T-cell (primary cell): ENCODE measurements at regions of chr2 and their contacts with region 1.

Region 1: GRCh38 chr2:118003396-118003824 is 10.5 kb downstream of the CCDC93 start:
- DNase-seq: peak in 29 of 35 experiments; percentile 4 to 87 (median 32)
- ATAC-seq: peak; percentile 93 to 97 (median 97)
- H3K4me3 ChIP-seq: no peak overlapping the region
- H3K4me3 Mint-ChIP-seq: no peak overlapping the region
- H3K27ac ChIP-seq: no peak overlapping the region
- H3K27ac Mint-ChIP-seq: peak overlapping the region in 1 of 2 donors; percentile 67
- H3K4me1 ChIP-seq: peaks cover 0 to 9% of the 10 kb centered on the region in 2 experiments
- H3K4me1 Mint-ChIP-seq: peaks cover 16 to 32% (median 25%) of the 10 kb centered on the region in 3 donors
- H3K27me3 ChIP-seq: no peaks in the 10 kb centered on the region
- H3K27me3 Mint-ChIP-seq: no peaks in the 10 kb centered on the region

Region 2: GRCh38 chr2:116467243-116467642 is 1536.2 kb before region 1 on chr2:
- CTCF ChIA-PET with region 1: no interaction called
- POLR2A ChIA-PET with region 1: no interaction called
- DNase-seq: no peak
- ATAC-seq: no peak
- H3K4me3 ChIP-seq: no peak overlapping the region
- H3K4me3 Mint-ChIP-seq: no peak overlapping the region
- H3K27ac ChIP-seq: no peak overlapping the region
- H3K27ac Mint-ChIP-seq: no peak overlapping the region
- H3K4me1 ChIP-seq: no peaks in the 10 kb centered on the region
- H3K4me1 Mint-ChIP-seq: no peaks in the 10 kb centered on the region
- H3K27me3 ChIP-seq: no peaks in the 10 kb centered on the region
- H3K27me3 Mint-ChIP-seq: no peaks in the 10 kb centered on the region

Region 3: GRCh38 chr2:117723888-117724434 is 279.4 kb before region 1 on chr2:
- CTCF ChIA-PET with region 1: no interaction called
- POLR2A ChIA-PET with region 1: no interaction called
- DNase-seq: no peak
- ATAC-seq: no peak
- H3K4me3 ChIP-seq: no peak overlapping the region
- H3K4me3 Mint-ChIP-seq: no peak overlapping the region
- H3K27ac ChIP-seq: no peak overlapping the region
- H3K27ac Mint-ChIP-seq: no peak overlapping the region
- H3K4me1 ChIP-seq: no peaks in the 10 kb centered on the region
- H3K4me1 Mint-ChIP-seq: peaks cover 0 to 3% (median 0%) of the 10 kb centered on the region in 3 donors
- H3K27me3 ChIP-seq: peaks cover 0 to 4% of the 10 kb centered on the region in 2 experiments
- H3K27me3 Mint-ChIP-seq: peaks cover 0 to 9% of the 10 kb centered on the region in 2 donors

Region 4: GRCh38 chr2:117814417-117815264 is 188.8 kb before region 1 on chr2 and contains the start of gene DDX18:
- CTCF ChIA-PET with region 1: interaction called, 5 to 76 read pairs
- POLR2A ChIA-PET with region 1: interaction called, 4 to 8 read pairs
- DNase-seq: peak; percentile 94 to 99 (median 98)
- ATAC-seq: peak; percentile 91 to 94 (median 92)
- H3K4me3 ChIP-seq: peak within 1 kb of the TSS; percentile 77 to 95
- H3K4me3 Mint-ChIP-seq: peak within 1 kb of the TSS; percentile 90 to 94 (median 91)
- H3K27ac ChIP-seq: peak within 1 kb of the TSS; percentile 96
- H3K27ac Mint-ChIP-seq: peak within 1 kb of the TSS; percentile 92 to 97
- H3K4me1 ChIP-seq: peaks cover 11 to 19% of the 10 kb centered on the region in 2 experiments
- H3K4me1 Mint-ChIP-seq: peaks cover 47 to 53% (median 48%) of the 10 kb centered on the region in 3 donors
- H3K27me3 ChIP-seq: no peaks in the 10 kb centered on the region
- H3K27me3 Mint-ChIP-seq: peaks cover 0 to 3% of the 10 kb centered on the region in 2 donors
- total RNA-seq, gene DDX18: 78.2 to 134 (median 88.7) TPM

Region 5: GRCh38 chr2:117835990-117836760 is 167.2 kb before region 1 on chr2:
- CTCF ChIA-PET with region 1: interaction called, 5 to 11 read pairs
- POLR2A ChIA-PET with region 1: no interaction called
- DNase-seq: peak in 30 of 35 experiments; percentile 24 to 65 (median 42)
- ATAC-seq: peak; percentile 71 to 84 (median 76)
- H3K4me3 ChIP-seq: peak overlapping the region; percentile 35 to 42
- H3K4me3 Mint-ChIP-seq: peak overlapping the region; percentile 73 to 83 (median 79)
- H3K27ac ChIP-seq: no peak overlapping the region
- H3K27ac Mint-ChIP-seq: no peak overlapping the region
- H3K4me1 ChIP-seq: peaks cover 0 to 16% of the 10 kb centered on the region in 2 experiments
- H3K4me1 Mint-ChIP-seq: peaks cover 11 to 16% (median 13%) of the 10 kb centered on the region in 3 donors
- H3K27me3 ChIP-seq: peaks cover 0 to 8% of the 10 kb centered on the region in 2 experiments
- H3K27me3 Mint-ChIP-seq: peaks cover 0 to 4% of the 10 kb centered on the region in 2 donors

Region 6: GRCh38 chr2:117989854-117990438 is 13.5 kb before region 1 on chr2:
- CTCF ChIA-PET with region 1: interaction called, 21 to 33 read pairs
- POLR2A ChIA-PET with region 1: interaction called in 1 of 2 experiments, 7 read pairs
- DNase-seq: no peak
- ATAC-seq: no peak
- H3K4me3 ChIP-seq: no peak overlapping the region
- H3K4me3 Mint-ChIP-seq: no peak overlapping the region
- H3K27ac ChIP-seq: no peak overlapping the region
- H3K27ac Mint-ChIP-seq: peak overlapping the region in 1 of 2 donors; percentile 12
- H3K4me1 ChIP-seq: no peaks in the 10 kb centered on the region
- H3K4me1 Mint-ChIP-seq: peaks cover 0 to 11% (median 6%) of the 10 kb centered on the region in 3 donors
- H3K27me3 ChIP-seq: no peaks in the 10 kb centered on the region
- H3K27me3 Mint-ChIP-seq: no peaks in the 10 kb centered on the region

Region 7: GRCh38 chr2:118013724-118014491 is 10.5 kb after region 1 on chr2 and contains the start of gene CCDC93:
- CTCF ChIA-PET with region 1: interaction called, 34 to 77 read pairs
- POLR2A ChIA-PET with region 1: interaction called, 3 to 10 read pairs
- DNase-seq: peak; percentile 69 to 95 (median 84)
- ATAC-seq: peak; percentile 89 to 90 (median 89)
- H3K4me3 ChIP-seq: peak within 1 kb of the TSS; percentile 86 to 99
- H3K4me3 Mint-ChIP-seq: peak within 1 kb of the TSS; percentile 90 to 94 (median 91)
- H3K27ac ChIP-seq: peak within 1 kb of the TSS; percentile 84
- H3K27ac Mint-ChIP-seq: peak within 1 kb of the TSS; percentile 84 to 92
- H3K4me1 ChIP-seq: peaks cover 11 to 23% of the 10 kb centered on the region in 2 experiments
- H3K4me1 Mint-ChIP-seq: peaks cover 46 to 49% (median 48%) of the 10 kb centered on the region in 3 donors
- H3K27me3 ChIP-seq: no peaks in the 10 kb centered on the region
- H3K27me3 Mint-ChIP-seq: peaks cover 2 to 5% of the 10 kb centered on the region in 2 donors
- total RNA-seq, gene CCDC93: 47.8 to 55.3 (median 50.5) TPM

Region 8: GRCh38 chr2:118032169-118033013 is 29.0 kb after region 1 on chr2:
- CTCF ChIA-PET with region 1: interaction called, 5 to 10 read pairs
- POLR2A ChIA-PET with region 1: interaction called in 1 of 2 experiments, 3 read pairs
- DNase-seq: peak in 24 of 35 experiments; percentile 5 to 64 (median 26)
- ATAC-seq: peak; percentile 54 to 69 (median 65)
- H3K4me3 ChIP-seq: no peak overlapping the region
- H3K4me3 Mint-ChIP-seq: no peak overlapping the region
- H3K27ac ChIP-seq: no peak overlapping the region
- H3K27ac Mint-ChIP-seq: no peak overlapping the region
- H3K4me1 ChIP-seq: no peaks in the 10 kb centered on the region
- H3K4me1 Mint-ChIP-seq: no peaks in the 10 kb centered on the region
- H3K27me3 ChIP-seq: peaks cover 3 to 8% of the 10 kb centered on the region in 2 experiments
- H3K27me3 Mint-ChIP-seq: peaks cover 43 to 44% of the 10 kb centered on the region in 2 donors

Region 9: DNA sequence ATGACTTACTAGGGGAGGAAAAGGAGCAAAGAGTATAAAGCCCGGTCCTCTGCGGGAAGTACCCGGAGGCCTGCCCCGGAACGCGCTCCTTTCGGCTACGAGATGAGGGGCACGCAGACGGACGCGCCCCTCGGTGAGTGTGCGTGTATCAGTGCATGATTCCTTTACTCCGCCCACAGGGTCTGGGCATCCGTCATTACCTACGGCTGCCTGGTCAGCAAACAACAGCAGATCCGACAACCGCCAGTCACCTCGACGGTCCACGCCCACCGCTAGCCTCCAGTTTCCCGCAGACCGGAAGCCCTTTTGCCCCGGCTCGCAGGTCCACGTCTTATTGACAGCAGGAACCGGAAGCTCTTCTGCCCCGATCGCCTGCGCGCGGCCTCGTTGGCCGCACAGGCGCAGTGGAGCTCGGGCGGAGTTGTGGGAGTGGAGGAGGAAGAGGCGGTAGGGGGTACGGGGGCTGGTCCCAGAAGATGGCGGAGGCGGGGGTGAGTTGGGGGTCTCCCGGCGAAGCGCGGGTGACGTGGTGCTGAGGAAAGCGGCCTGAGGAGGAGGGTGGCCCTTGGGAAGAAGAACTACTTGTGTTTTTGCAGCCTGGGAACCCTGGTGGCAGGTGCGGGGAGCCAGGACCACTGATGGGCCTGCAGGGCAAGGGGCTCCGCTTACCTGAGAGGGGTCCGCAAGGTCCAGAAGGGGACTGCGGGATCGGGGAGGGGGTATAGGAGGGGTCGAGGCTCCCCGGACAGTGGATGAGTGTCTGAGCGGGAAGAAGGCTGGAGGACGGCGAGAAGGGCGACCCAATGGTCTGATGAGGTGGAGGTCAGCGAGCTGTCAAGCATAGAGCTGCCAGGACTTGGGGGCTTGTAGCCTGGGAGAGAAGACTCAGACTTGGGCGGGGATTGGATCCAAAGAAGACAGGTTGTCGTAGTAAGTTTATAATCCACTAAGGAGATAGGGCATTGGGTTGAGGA is 84.9 kb after region 1 on chr2 and contains the start of gene INSIG2:
- CTCF ChIA-PET with region 1: interaction called, 3 to 12 read pairs
- POLR2A ChIA-PET with region 1: no interaction called
- DNase-seq: peak; percentile 76 to 91 (median 82)
- ATAC-seq: peak; percentile 93 to 95 (median 94)
- H3K4me3 ChIP-seq: peak within 1 kb of the TSS; percentile 69 to 94
- H3K4me3 Mint-ChIP-seq: peak within 1 kb of the TSS; percentile 84 to 91 (median 90)
- H3K27ac ChIP-seq: peak within 1 kb of the TSS; percentile 54
- H3K27ac Mint-ChIP-seq: peak within 1 kb of the TSS; percentile 77 to 91
- H3K4me1 ChIP-seq: peaks cover 12 to 14% of the 10 kb centered on the region in 2 experiments
- H3K4me1 Mint-ChIP-seq: peaks cover 7 to 32% (median 28%) of the 10 kb centered on the region in 3 donors
- H3K27me3 ChIP-seq: no peaks in the 10 kb centered on the region
- H3K27me3 Mint-ChIP-seq: peaks cover 0 to 2% of the 10 kb centered on the region in 2 donors
- total RNA-seq, gene INSIG2: 13.8 to 18.9 (median 16.9) TPM

Region 10: DNA sequence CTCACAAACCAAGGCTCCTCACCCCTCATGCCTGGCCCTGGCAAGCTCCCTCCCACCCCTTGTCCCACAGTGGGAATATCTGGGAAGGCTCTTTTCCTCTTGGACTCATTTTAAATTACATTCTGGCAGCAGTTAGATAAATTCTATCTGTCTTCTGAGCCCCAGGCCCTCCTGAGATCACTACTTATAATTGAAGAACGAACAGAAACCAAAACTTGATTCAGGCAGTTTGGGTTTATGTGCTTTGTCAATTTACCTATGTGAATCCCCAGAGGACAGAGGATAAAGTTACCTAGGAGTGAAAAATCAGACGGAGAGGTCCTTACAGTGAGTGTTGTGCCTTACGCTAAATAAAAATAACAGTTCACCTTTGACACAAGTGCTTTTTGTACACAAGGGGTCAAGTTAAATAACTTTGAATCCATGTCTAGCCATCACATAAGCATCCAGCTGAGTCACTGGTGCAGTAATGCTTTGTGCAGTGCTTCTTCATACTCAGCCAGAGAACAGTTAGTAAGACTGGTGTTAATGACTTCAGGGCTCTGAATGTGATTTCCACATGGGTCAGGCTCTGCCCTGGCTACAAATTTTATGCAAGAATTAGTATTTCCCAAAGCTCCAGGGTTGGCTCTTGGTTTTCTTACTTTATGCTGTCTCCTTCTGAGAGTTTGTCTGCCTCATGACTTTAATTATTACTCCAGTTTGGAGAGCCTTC is 414.2 kb after region 1 on chr2:
- CTCF ChIA-PET with region 1: no interaction called
- POLR2A ChIA-PET with region 1: no interaction called
- DNase-seq: no peak
- ATAC-seq: no peak
- H3K4me3 ChIP-seq: no peak overlapping the region
- H3K4me3 Mint-ChIP-seq: no peak overlapping the region
- H3K27ac ChIP-seq: no peak overlapping the region
- H3K27ac Mint-ChIP-seq: no peak overlapping the region
- H3K4me1 ChIP-seq: no peaks in the 10 kb centered on the region
- H3K4me1 Mint-ChIP-seq: no peaks in the 10 kb centered on the region
- H3K27me3 ChIP-seq: no peaks in the 10 kb centered on the region
- H3K27me3 Mint-ChIP-seq: peaks cover 7 to 33% of the 10 kb centered on the region in 2 donors